ENCODE measurements at regions of chr10 and their contacts with region 1.

Region 1: DNA sequence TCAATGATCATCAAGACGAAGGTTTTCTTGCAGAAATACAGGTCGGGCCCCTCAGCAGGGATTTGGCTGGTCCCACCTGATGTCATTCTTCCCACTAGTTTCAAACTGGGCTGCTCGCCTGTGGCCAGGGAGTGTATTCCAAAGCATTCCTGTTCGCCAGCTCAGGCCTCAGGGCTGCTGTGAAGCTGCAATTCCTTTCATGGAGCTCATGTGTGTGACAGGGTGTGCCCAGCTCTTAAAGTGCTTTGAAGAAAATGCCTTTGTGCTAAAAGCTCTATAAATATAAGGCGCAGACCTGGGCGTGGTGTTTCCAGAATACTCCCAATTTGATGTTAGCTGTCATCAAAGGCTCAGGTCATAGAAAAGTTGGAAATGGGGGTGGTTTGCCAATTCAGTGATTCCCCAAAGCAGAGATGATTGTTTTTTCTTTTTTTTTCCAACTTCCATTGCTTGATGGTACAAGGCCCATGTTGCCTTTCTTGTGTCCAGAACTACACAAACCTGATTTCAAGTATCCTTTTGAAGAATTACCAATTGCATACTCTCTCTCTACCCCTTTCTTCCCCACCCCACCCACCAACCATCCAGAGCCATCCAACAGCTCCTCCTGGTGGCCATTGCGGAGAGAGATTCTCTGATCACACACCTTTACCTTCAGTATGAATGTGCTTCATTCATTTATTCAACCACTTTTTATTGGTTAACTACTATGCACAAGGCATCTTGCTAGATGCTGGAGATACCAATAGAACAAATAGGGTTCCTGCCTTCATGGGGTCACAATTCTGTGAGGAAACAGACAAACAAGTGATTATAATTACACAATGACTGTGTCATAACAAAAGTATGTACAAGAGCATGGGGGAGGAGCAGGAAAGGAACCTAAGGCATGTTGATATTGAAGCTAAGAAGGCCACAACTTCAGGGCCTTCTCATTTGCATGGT is 297.3 kb upstream of the LYZL1 start:
- DNase-seq: peak in 1 of 2 donors; percentile 78
- H3K4me3 ChIP-seq: no peak overlapping the region
- H3K27ac ChIP-seq: peak overlapping the region in 1 of 2 donors; percentile 53
- H3K4me1 ChIP-seq: peaks cover 0 to 26% (median 13%) of the 10 kb centered on the region in 4 donors
- H3K27me3 ChIP-seq: no peaks in the 10 kb centered on the region
- CTCF ChIP-seq: peak; percentile 64 to 67

Region 2: GRCh38 chr10:28663576-28664313 is 327.9 kb before region 1 on chr10:
- intact Hi-C with region 1: loop called (anchors 5 kb)
- DNase-seq: peak; percentile 73 to 88
- H3K4me3 ChIP-seq: no peak overlapping the region
- H3K27ac ChIP-seq: peak overlapping the region; percentile 39 to 53
- H3K4me1 ChIP-seq: peaks cover 0 to 26% (median 11%) of the 10 kb centered on the region in 4 donors
- H3K27me3 ChIP-seq: peaks cover 3% of the 10 kb centered on the region in 2 donors
- CTCF ChIP-seq: peak; percentile 95 to 99

Region 3: DNA sequence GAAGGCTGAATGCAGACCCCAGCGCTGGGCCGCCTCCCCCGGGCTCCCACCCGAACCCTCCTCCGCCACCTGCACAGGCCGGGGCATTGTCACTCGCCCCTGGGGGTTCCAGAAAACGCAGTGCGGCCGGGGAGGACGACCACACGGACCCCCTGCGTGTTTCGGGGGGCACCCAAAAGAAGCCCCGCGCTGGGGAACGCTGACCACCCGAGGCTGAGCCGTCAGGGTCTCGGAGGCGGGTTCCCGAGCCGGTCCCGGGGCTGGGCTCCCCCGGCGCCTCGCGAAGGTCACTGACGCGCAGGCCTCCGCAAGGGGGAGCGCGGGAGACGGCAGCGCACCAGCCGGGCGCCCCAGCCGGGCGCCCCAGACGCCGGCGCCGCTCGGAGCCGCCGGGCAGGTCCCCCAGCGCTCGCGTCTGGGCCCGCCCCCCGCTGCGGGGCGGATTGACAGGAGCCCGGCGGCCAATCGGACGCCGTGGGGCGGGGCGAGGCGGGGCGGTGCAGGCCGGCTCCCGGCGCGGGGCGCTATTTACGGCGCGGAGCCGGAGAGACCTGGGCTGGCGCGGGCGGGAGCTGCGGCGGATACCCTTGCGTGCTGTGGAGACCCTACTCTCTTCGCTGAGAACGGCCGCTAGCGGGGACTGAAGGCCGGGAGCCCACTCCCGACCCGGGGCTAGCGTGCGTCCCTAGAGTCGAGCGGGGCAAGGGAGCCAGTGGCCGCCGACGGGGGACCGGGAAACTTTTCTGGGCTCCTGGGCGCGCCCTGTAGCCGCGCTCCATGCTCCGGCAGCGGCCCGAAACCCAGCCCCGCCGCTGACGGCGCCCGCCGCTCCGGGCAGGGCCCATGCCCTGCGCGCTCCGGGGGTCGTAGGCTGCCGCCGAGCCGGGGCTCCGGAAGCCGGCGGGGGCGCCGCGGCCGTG is 314.4 kb before region 1 on chr10 and contains the start of gene BAMBI:
- intact Hi-C with region 1: loop called (anchors 5 kb)
- DNase-seq: peak; percentile 90 to 93
- H3K4me3 ChIP-seq: peak within 1 kb of the TSS; percentile 79 to 86
- H3K27ac ChIP-seq: peak within 1 kb of the TSS; percentile 66 to 72
- H3K4me1 ChIP-seq: peaks cover 0 to 43% (median 19%) of the 10 kb centered on the region in 4 donors
- H3K27me3 ChIP-seq: no peaks in the 10 kb centered on the region
- CTCF ChIP-seq: peak; percentile 55 to 89

Measured in tibial artery (tissue), 4 donors.